PC-9 (cell line): ENCODE measurements at regions of chr3 and their contacts with region 1.

Region 1: DNA sequence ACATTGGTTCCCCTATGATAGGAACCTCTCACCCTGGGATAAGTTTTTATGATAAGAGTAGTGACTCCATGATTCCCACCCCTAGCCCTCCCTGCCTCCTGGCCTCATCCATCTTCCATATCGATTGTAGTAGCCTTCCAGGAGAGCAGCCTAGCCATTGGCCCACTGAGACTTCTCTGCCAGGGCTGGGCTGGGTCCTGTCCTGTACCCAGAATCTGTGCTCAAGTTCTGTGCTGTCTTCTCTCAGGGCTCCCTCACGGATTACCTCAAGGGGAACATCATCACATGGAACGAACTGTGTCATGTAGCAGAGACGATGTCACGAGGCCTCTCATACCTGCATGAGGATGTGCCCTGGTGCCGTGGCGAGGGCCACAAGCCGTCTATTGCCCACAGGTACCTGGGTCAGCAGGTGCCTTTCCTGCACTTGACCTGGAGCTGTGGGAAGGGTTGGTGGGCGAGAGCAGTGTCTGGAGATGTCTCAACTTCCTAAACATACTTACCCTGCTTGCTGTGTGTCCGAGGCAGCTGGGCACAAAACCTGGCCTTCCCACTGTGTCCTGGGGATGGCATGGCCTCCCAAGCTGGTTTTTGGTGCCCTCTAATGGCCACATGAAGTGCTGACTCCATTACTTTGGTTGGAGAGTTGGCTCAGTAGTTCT is 16.6 kb upstream of the EXOG start:
- DNase-seq: peak in 1 of 2 experiments; percentile 50
- H3K4me3 ChIP-seq: no peak overlapping the region
- H3K27ac ChIP-seq: no peak overlapping the region
- H3K4me1 ChIP-seq: no peaks in the 10 kb centered on the region
- H3K27me3 ChIP-seq: no peaks in the 10 kb centered on the region
- CTCF ChIP-seq: peak; percentile 79

Region 2: DNA sequence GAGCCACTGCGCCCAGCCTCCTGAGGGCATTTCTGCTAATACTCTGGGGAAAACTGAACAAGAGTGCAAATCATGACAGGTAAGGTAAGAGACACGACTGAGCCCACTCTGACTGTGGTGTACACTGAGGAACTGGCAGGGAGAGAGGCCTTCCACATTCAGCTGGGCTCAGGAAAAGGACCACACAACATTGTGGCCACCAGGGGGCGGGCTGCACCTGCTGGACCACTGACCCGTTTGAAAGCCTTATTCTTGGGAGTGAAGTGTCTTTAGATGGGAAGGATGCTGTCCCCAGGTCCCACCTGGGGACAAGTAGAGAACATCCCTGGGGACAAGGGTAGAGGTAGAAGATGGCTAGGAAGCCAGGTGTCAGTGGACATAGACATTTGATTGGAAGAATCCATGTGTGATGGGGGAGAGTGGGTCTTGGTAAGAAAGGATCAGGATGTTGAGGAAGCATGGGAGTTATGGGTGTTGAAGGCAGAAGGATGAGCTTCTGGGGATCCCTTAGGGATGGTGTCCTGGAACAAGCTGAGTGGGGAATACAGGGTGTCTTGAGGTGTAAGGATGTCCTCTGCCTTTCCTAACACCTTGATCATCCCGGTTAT is 624.1 kb before region 1 on chr3:
- CTCF ChIA-PET with region 1: no interaction called
- POLR2A ChIA-PET with region 1: no interaction called
- intact Hi-C with region 1: loop called (anchors 10 kb)
- DNase-seq: peak; percentile 61 to 76
- H3K4me3 ChIP-seq: no peak overlapping the region
- H3K27ac ChIP-seq: no peak overlapping the region
- H3K4me1 ChIP-seq: peaks cover 16% of the 10 kb centered on the region
- H3K27me3 ChIP-seq: no peaks in the 10 kb centered on the region
- CTCF ChIP-seq: peak; percentile 91

Region 3: GRCh38 chr3:37974121-37975083 is 505.2 kb before region 1 on chr3:
- CTCF ChIA-PET with region 1: no interaction called
- POLR2A ChIA-PET with region 1: no interaction called
- intact Hi-C with region 1: loop called (anchors 1 kb)
- DNase-seq: peak; percentile 47 to 62
- H3K4me3 ChIP-seq: no peak overlapping the region
- H3K27ac ChIP-seq: no peak overlapping the region
- H3K4me1 ChIP-seq: no peaks in the 10 kb centered on the region
- H3K27me3 ChIP-seq: no peaks in the 10 kb centered on the region
- CTCF ChIP-seq: peak; percentile 85

Region 4: DNA sequence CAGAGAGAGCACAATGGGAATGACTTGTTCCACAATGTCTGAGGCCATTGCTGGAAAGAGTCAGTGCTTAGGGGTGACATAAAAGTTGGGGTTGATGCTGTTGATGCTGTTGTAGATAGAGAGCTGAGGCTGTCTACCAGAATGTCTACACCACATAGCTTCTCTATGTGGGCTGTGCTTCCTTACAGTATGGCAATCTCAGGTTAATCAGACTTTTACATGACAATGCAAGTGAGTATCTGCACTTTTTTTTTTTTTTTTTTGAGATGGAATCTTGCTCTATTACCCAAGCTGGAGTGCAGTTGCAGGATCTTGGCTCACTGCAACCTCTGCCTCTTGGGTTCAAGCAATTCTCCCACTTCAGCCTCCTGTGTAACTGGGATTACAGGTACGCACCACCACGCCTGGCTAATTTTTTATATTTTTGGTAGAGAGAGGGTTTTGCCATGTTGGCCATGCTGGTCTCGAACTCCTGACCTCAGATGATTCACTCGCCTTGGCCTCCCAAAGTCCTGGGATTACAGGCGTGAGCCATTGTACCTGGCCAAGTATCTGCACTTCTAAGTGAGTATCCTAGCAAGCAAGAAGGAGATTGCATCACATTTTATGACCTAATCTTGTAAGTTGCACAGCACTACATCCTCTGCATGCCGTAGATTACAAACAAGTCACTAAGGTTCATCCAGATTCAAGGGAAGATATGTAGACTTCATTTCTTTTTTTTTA is 411.9 kb before region 1 on chr3:
- CTCF ChIA-PET with region 1: no interaction called
- POLR2A ChIA-PET with region 1: no interaction called
- intact Hi-C with region 1: no loop called
- DNase-seq: no peak
- H3K4me3 ChIP-seq: no peak overlapping the region
- H3K27ac ChIP-seq: no peak overlapping the region
- H3K4me1 ChIP-seq: no peaks in the 10 kb centered on the region
- H3K27me3 ChIP-seq: peaks cover 14% of the 10 kb centered on the region; the same call in 1 of the 2 replicates
- CTCF ChIP-seq: no peak

Region 5: DNA sequence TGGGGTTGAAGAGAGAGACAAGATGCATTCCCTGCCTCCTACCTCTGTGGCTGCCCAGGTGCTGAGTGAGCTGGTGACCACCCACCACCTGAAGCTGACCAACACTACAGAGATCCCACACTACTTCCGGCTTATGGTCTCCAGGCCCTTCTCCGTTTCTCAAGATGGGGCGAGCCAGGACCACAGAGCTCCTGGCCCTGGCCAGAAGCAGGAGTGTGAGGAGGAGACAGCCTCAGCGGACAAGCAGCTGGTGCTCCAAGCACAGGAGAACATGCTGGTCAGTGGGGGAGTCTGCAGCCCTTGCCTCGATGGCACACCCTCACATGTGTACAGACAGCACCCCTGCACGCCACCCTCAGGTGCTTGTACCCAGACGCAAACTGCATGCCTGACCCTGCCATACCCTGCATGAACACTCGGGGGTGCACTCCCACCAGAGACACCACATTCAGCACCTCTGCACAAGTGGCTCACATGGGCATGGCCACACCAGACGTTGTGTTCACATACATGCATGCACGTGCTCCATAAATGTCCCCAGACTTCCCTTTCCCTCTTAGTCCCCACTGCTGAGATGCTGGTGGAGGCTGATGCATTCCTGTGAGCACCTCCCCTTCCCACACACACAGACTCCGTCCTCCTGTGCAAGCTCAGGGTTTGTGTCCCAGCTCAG is 361.7 kb before region 1 on chr3:
- CTCF ChIA-PET with region 1: no interaction called
- POLR2A ChIA-PET with region 1: no interaction called
- intact Hi-C with region 1: loop called (anchors 1 kb)
- DNase-seq: peak in 1 of 2 experiments; percentile 56
- H3K4me3 ChIP-seq: no peak overlapping the region
- H3K27ac ChIP-seq: no peak overlapping the region
- H3K4me1 ChIP-seq: no peaks in the 10 kb centered on the region
- H3K27me3 ChIP-seq: no peaks in the 10 kb centered on the region
- CTCF ChIP-seq: peak; percentile 67

Region 6: GRCh38 chr3:38247366-38248035 is 232.1 kb before region 1 on chr3:
- CTCF ChIA-PET with region 1: no interaction called
- POLR2A ChIA-PET with region 1: no interaction called
- intact Hi-C with region 1: loop called (anchors 5 kb)
- DNase-seq: peak; percentile 25 to 70
- H3K4me3 ChIP-seq: no peak overlapping the region
- H3K27ac ChIP-seq: peak overlapping the region; percentile 17; the same call in 1 of the 2 replicates
- H3K4me1 ChIP-seq: 0 out of 2 replicates have a peak, but pooled peaks cover 3% of the 10 kb centered on the region
- H3K27me3 ChIP-seq: no peaks in the 10 kb centered on the region
- CTCF ChIP-seq: no peak; the same call in 1 of the 2 replicates

Region 7: GRCh38 chr3:38327335-38328009 is 152.1 kb before region 1 on chr3:
- CTCF ChIA-PET with region 1: no interaction called
- POLR2A ChIA-PET with region 1: no interaction called
- intact Hi-C with region 1: no loop called
- DNase-seq: peak; percentile 14 to 72
- H3K4me3 ChIP-seq: no peak overlapping the region
- H3K27ac ChIP-seq: peak overlapping the region; percentile 70
- H3K4me1 ChIP-seq: peaks cover 11% of the 10 kb centered on the region
- H3K27me3 ChIP-seq: no peaks in the 10 kb centered on the region
- CTCF ChIP-seq: no peak

Region 8: DNA sequence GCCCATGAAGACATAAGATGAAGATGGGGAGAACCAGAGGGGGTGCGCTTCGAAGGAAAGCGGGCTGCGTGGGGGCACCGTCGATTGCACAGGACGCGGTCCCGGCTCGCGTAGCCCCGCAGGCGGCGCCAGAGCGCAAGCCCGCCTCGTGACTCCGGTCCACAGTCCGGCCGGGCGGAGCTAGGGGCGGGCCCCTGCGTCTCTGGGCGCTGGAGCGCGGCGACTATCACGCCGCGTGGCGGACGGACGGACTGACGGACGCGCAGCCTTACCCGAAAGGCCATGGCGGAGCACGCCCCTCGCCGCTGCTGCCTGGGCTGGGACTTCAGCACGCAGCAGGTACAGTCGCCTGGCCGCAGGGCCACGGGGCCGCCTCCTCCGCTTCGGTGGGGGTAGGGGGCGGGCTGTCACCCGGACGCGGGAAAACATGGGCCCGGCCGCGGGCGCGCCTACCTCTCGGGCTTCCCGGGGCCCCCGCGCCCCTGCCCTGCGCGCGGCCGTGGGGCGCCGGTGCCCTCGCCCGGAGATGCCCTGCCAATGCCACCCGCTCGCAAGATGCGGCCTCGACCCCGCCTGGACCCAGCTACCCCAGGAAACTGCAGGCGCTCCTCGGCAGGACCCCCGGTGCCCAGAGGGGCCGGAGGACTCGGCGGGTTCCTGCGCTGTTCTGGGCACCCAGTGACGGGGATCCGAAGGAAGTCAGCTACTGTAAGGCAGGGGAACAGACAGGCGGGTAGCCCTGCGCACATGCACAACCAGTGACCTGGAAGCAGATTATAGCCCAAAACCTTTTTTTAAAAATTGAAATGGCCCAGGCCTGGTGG is 132.8 kb before region 1 on chr3 and contains the start of gene XYLB:
- CTCF ChIA-PET with region 1: no interaction called
- POLR2A ChIA-PET with region 1: no interaction called
- intact Hi-C with region 1: loop called (anchors 2 kb)
- DNase-seq: peak; percentile 66 to 82
- H3K4me3 ChIP-seq: peak within 1 kb of the TSS; percentile 81
- H3K27ac ChIP-seq: no peak within 1 kb of the TSS
- H3K4me1 ChIP-seq: peaks cover 11% of the 10 kb centered on the region
- H3K27me3 ChIP-seq: no peaks in the 10 kb centered on the region
- CTCF ChIP-seq: peak; percentile 66
- total RNA-seq, gene XYLB: 2.4 and 4.2 TPM in 2 replicates

Region 9: GRCh38 chr3:38453075-38453912 is 26.3 kb before region 1 on chr3 and contains the start of gene ACVR2B:
- CTCF ChIA-PET with region 1: no interaction called
- POLR2A ChIA-PET with region 1: no interaction called
- intact Hi-C with region 1: loop called (anchors 2 kb)
- DNase-seq: peak; percentile 65 to 77
- H3K4me3 ChIP-seq: peak within 1 kb of the TSS; percentile 89
- H3K27ac ChIP-seq: no peak within 1 kb of the TSS
- H3K4me1 ChIP-seq: peaks cover 13% of the 10 kb centered on the region
- H3K27me3 ChIP-seq: no peaks in the 10 kb centered on the region
- CTCF ChIP-seq: no peak
- total RNA-seq, gene ACVR2B: 11.0 and 12.4 TPM in 2 replicates

Region 10: GRCh38 chr3:38493031-38493430 is 13.5 kb after region 1 on chr3:
- CTCF ChIA-PET with region 1: no interaction called
- POLR2A ChIA-PET with region 1: no interaction called
- intact Hi-C with region 1: no loop called
- DNase-seq: no peak
- H3K4me3 ChIP-seq: no peak overlapping the region
- H3K27ac ChIP-seq: no peak overlapping the region
- H3K4me1 ChIP-seq: 0 out of 2 replicates have a peak, but pooled peaks cover 4% of the 10 kb centered on the region
- H3K27me3 ChIP-seq: no peaks in the 10 kb centered on the region
- CTCF ChIP-seq: no peak